ENCODE measurements at regions of chr22 and their contacts with region 1.

Region 1: DNA sequence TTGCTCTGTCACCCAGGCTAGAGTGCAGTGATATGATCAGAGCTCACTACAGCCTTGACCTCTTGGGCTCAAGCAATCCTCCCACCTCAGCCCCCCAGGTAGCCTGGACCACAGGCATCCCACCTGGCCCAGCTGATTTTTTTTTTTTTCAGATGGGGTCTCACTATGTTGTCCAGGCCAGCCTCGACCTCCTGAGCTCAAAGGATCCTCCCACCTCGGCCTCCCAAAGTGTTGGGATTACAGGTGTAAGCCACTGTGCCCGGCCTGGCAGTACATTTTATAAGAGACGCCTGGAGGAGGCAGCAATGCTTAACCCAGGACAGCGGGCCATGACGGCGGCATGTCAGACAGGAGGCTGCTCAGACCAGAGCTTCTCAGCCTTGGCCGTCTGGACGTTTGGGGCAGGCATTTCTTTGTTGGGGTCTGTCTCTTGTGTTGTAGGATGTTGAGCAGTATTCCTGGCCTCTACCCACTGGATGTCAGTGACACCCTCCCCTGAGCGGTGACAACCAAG is 4.3 kb downstream of the LGALS2 start:
- DNase-seq: no peak
- H3K4me3 Mint-ChIP-seq: no peak overlapping the region
- H3K27ac Mint-ChIP-seq: no peak overlapping the region
- H3K4me1 Mint-ChIP-seq: peaks cover 9% of the 10 kb centered on the region
- H3K27me3 Mint-ChIP-seq: peaks cover 1% of the 10 kb centered on the region

Region 2: DNA sequence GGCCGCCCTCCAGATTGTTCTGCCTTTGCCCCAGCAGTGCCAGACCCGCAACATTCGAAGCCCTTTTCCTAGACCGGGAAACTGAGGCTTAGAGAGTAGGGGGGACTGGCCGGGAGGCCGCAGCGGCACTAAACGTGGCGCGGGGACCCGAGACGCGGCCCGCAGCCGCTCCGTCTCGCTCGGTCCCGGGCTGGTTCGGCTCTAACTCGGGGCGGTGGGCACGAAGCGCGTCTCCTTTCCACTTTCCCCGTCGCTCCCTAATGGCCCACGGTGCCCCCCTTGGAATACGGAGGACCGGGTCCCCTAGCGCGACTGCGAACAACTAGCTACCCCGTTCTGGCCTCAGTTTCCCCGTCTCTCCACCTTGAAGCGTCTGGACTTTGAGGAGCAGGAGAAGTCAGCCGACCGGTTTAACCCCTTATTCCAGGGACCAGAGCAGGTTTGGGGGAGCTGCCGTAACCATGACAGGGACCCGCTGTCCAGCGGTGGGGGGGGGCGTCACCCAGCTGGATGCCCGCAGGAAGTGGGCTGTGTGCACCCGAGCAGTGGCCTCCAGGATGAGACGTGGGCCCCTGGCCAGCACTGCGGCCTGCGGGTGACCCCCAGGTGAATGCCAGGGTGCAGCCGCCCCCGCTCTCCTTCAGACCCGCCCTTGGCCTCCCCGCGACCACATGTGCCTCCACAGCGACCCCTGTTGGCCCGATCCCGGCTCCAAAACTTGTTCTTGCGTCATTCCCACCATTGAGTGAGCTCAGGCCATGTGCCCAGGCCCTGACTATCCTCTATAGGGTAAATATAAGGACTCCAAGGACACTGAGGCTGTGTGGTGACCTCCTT is 14.1 kb before region 1 on chr22:
- CTCF ChIA-PET with region 1: interaction called, 13 read pairs
- POLR2A ChIA-PET with region 1: no interaction called
- intact Hi-C with region 1: no loop called
- DNase-seq: peak; percentile 91
- H3K4me3 Mint-ChIP-seq: peak overlapping the region; percentile 54
- H3K27ac Mint-ChIP-seq: no peak overlapping the region
- H3K4me1 Mint-ChIP-seq: peaks cover 29% of the 10 kb centered on the region
- H3K27me3 Mint-ChIP-seq: peaks cover 48% of the 10 kb centered on the region

Measured in activated CD4-positive, alpha-beta memory T cell treated with anti-CD3 and anti-CD28 coated beads for 36 hours (primary cell).